Lower leg skin (tissue), 4 donors: ENCODE measurements at regions of chr6 and their contacts with region 1.

Region 1: DNA sequence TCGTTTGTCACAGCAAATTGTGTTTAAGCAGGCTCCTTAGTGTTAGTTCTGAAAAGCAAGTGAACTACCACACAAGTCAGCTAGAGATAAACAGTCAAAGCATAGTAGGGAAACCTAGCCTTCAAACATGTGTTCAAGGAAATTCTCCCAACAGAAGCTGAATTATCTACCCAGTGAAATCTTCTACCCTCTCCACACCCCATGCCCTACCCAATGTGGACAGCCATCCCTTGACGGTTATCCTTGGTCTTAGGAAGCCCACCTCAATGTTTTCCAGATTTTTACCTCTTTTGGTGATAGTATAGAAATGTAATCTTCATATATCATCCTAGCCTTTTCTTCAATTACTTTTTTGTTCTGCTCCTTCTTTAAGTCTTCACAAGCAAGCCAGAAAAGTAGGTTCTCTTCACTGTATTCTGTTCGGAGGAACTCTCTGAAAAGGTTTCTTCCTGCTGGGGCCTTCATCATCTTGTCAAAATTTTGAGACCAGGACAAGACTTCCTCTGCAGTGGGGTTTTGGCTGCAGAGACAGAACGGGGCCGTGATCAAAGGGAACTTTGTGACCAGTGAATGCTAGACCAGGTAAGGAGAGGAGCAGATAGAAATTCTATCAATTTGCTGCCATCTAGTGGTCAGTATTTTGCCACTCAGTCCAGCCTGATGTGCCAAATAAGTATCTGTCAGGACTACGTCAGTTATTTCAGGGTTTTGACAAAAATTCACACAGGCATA is 21.6 kb upstream of the MTRF1L start:
- DNase-seq: peak in 1 of 2 donors; percentile 27
- H3K4me3 ChIP-seq: no peak overlapping the region
- CTCF ChIP-seq: no peak
- POLR2A ChIP-seq: no peak

Region 2: GRCh38 chr6:152863618-152864326 is 160.4 kb before region 1 on chr6:
- intact Hi-C with region 1: loop called (anchors 10 kb)
- DNase-seq: peak; percentile 64 to 82
- H3K4me3 ChIP-seq: no peak overlapping the region
- CTCF ChIP-seq: no peak
- POLR2A ChIP-seq: no peak

Region 3: GRCh38 chr6:152957796-152958195 is 66.3 kb before region 1 on chr6:
- intact Hi-C with region 1: loop called (anchors 5 kb)
- DNase-seq: no peak
- H3K4me3 ChIP-seq: no peak overlapping the region
- CTCF ChIP-seq: no peak
- POLR2A ChIP-seq: no peak

Region 4: GRCh38 chr6:153251326-153251725 is 227.2 kb after region 1 on chr6:
- intact Hi-C with region 1: no loop called
- DNase-seq: no peak
- H3K4me3 ChIP-seq: no peak overlapping the region
- CTCF ChIP-seq: no peak
- POLR2A ChIP-seq: no peak

Region 5: DNA sequence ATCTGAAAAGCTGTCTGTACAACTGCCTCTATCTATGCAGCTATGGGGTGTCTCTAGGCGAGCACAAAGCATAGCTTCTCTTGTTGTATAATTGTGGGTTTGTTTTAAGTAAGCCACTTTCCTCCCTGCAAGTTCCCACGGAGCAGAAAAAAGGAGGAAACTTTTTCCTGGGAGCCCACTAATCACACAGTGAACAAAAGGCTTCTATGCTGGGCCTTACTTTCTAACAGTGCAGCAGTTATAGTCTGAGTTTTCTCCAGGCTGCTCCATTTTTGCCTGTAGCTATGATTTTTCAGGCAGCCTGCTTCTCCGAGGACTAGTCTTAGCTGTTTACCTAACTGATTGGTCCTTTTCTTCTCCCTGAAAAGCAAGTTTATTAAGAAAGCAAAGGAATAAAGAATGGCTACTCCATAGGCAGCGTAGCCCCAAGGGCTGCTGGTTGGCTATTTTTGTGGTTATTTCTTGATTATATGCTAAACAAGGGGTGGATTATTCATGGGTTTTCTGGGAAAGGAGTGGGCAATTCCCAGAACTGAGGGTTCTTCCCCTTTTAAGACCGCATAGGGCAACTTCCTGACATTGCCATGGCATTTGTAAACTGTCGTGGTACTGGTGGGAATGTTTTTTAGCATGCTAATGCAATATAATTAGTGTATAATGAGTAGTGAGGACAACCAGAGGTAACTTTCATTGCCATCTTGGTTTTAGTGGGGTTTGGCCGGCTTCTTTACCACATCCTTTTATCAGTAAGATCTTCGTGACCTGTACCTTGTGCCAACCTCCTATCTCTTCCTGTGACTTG is 1099.2 kb after region 1 on chr6:
- intact Hi-C with region 1: no loop called
- DNase-seq: no peak
- H3K4me3 ChIP-seq: no peak overlapping the region
- CTCF ChIP-seq: no peak
- POLR2A ChIP-seq: no peak